ENCODE measurements at regions of chr14 and their contacts with region 1.

Region 1: GRCh38 chr14:70640938-70641547 is 673 bp upstream of the TTC9 start:
- DNase-seq: peak; percentile 46 to 79
- ATAC-seq: peak; percentile 58
- H3K4me3 ChIP-seq: peak overlapping the region; percentile 93 to 99
- H3K27ac ChIP-seq: no peak overlapping the region
- H3K4me1 ChIP-seq: peaks cover 0 to 5% of the 10 kb centered on the region in 2 donors
- H3K27me3 ChIP-seq: no peaks in the 10 kb centered on the region

Region 2: GRCh38 chr14:70600382-70601157 is 40.5 kb before region 1 on chr14 and contains the start of gene MED6:
- intact Hi-C with region 1: loop called in 1 of 2 experiments (anchors 5 kb)
- DNase-seq: peak; percentile 96 to 98
- ATAC-seq: peak; percentile 97
- H3K4me3 ChIP-seq: peak within 1 kb of the TSS; percentile 70 to 100
- H3K27ac ChIP-seq: no peak within 1 kb of the TSS
- H3K4me1 ChIP-seq: peaks cover 0 to 7% of the 10 kb centered on the region in 2 donors
- H3K27me3 ChIP-seq: no peaks in the 10 kb centered on the region
- total RNA-seq, gene MED6: 31.5 to 40.1 TPM

Region 3: GRCh38 chr14:70947711-70948110 is 306.7 kb after region 1 on chr14:
- intact Hi-C with region 1: no loop called
- DNase-seq: no peak
- ATAC-seq: no peak
- H3K4me3 ChIP-seq: no peak overlapping the region
- H3K27ac ChIP-seq: no peak overlapping the region
- H3K4me1 ChIP-seq: no peaks in the 10 kb centered on the region
- H3K27me3 ChIP-seq: no peaks in the 10 kb centered on the region